ENCODE measurements at regions of chr22 and their contacts with region 1.

Region 1: DNA sequence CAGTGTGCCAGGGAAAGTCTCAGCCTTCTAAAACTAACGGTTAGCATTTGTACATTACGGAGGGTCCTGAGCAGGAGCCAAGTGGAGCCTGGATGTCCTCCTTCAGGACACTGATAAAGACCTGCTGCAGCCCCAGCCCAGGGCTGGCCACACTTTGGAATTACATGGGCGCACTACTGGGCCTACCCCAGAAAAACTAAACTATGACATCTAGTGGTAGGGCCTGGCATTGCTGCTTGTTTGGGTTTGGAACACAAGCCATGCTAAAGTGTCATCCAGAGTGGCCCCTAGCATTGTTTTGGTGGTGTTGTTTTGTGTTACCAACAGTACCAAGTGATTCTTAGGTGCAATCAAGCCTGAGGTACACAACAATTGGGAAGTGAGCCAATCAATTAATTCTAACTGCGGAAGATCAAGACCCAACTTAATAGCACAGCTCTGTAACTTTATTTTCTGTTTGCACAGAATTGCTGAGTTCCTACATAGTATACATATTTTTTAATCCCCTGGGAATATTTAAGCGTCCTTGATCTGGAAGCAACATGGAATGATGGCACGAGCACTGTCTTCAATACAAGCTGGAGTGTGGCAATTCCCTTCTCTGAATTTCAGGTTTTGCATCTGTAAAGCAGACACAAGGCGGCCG is 340.7 kb downstream of the LARGE1 start:
- DNase-seq: peak; percentile 43
- ATAC-seq: no peak
- H3K4me3 Mint-ChIP-seq: no peak overlapping the region
- H3K27ac Mint-ChIP-seq: no peak overlapping the region
- H3K4me1 Mint-ChIP-seq: no peaks in the 10 kb centered on the region
- H3K27me3 Mint-ChIP-seq: no peaks in the 10 kb centered on the region
- CTCF ChIP-seq: peak; percentile 76

Region 2: DNA sequence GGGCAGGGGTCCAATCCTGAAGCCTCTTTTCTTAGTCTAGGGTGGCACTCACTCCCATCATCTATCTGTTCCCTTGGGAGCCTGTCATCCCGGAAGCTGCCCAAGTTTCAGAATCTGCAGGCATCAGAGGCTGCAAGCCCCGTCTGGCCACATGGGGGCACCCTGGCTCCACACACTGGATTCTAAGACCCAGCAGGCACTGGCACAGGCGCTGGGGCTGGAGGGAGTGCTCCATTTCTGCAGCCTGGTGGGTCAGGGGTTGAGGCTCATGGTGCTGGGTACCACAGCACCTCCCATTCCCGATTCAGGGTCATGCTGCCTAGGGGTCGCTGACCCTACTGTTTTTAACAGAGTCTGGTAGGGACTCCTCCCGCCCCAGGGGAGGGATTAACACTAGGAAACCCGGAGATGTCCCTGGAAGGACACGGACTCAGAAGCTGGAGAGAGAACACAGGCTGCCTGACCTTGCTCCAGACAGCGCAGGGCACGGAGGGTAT is 277.5 kb before region 1 on chr22:
- CTCF ChIA-PET with region 1: interaction called, 3 read pairs
- POLR2A ChIA-PET with region 1: no interaction called
- intact Hi-C with region 1: loop called (anchors 5 kb)
- DNase-seq: peak; percentile 75
- ATAC-seq: no peak
- H3K4me3 Mint-ChIP-seq: no peak overlapping the region
- H3K27ac Mint-ChIP-seq: no peak overlapping the region
- H3K4me1 Mint-ChIP-seq: no peaks in the 10 kb centered on the region
- H3K27me3 Mint-ChIP-seq: no peaks in the 10 kb centered on the region
- CTCF ChIP-seq: peak; percentile 86

Region 3: DNA sequence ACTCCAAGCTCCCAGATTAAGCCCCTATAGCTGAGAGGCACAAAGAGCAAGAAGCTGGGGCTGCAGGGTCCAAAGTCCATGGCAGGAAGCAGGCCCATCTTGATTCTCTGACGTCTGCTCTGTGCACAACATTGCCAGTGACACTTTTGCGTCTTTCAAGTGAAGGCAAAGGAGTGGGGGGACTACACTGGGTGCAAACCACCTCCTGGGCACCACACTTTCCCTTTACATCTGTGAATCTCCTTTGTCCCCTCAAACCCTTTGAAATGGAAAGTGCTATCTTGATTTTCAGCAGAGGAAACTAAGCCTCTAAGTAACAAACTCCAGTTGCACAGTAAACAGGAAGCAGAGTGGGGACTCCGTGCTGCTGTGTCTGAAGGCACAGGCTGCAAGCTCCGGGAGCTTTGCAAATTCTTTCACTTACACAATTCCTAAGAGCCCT is 87.3 kb before region 1 on chr22:
- CTCF ChIA-PET with region 1: no interaction called
- POLR2A ChIA-PET with region 1: no interaction called
- intact Hi-C with region 1: no loop called
- DNase-seq: no peak
- ATAC-seq: no peak
- H3K4me3 Mint-ChIP-seq: no peak overlapping the region
- H3K27ac Mint-ChIP-seq: no peak overlapping the region
- H3K4me1 Mint-ChIP-seq: no peaks in the 10 kb centered on the region
- H3K27me3 Mint-ChIP-seq: no peaks in the 10 kb centered on the region
- CTCF ChIP-seq: no peak